A673 (cell line): ENCODE measurements at regions of chr17 and their contacts with region 1.

Region 1: GRCh38 chr17:72120642-72121163 is at the start of gene SOX9:
- DNase-seq: peak; percentile 98
- H3K4me3 ChIP-seq: peak within 1 kb of the TSS; percentile 93
- H3K27ac ChIP-seq: peak within 1 kb of the TSS; percentile 67
- H3K4me1 ChIP-seq: peaks cover 36% of the 10 kb centered on the region
- H3K27me3 ChIP-seq: no peaks in the 10 kb centered on the region
- CTCF ChIP-seq: no peak
- total RNA-seq, gene SOX9: 31.1 and 37.5 TPM in 2 replicates

Region 2: GRCh38 chr17:70767102-70767701 is 1353.5 kb before region 1 on chr17:
- CTCF ChIA-PET with region 1: no interaction called
- POLR2A ChIA-PET with region 1: no interaction called
- intact Hi-C with region 1: loop called (anchors 1 kb)
- DNase-seq: peak; percentile 34
- H3K4me3 ChIP-seq: no peak overlapping the region
- H3K27ac ChIP-seq: no peak overlapping the region
- H3K4me1 ChIP-seq: no peaks in the 10 kb centered on the region
- H3K27me3 ChIP-seq: no peaks in the 10 kb centered on the region
- CTCF ChIP-seq: peak; percentile 72

Region 3: DNA sequence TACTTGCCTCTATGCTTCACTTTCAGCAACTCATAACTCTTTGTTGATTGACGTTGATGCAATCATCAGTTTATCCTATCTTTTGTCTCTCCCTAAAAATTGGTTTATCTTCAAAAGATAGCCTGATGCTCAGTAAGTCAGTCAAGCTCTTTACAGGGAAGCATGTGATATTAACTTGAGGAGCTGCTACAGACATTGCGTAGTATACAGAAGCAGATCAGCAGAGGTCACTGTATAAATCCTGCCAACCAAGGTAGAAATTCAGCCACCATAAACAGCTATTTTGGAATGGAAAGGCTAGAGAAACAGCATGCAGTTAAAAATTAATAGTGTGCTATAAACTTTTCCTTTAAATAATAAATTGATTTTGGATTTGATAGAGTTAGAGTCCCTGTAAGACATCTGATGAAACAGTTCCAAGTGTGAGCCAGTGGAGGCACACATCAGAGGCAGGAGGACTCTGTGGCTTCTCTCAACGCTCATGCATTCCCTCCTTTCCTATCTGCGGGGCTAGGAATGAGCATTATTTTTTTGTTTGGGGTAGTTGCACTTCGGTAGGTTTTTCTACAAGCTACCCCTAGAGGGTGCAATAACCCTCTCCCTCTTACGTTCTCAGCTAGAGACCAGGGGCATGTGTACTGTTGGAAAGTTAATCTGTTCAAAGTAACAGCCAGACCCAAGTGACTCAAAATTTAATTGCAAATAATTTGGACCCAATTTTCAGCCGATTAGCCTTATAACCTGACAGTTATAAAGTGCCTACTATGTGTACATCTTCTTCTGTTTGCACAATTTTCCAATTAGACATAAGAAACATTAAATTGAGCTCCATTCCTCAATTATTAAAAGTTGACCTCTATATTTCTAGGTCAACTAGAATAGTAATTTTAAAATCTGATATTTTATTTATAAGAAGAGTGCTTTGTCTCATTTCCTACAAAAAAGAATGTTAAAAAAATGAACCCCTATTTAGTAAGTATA is 647.6 kb before region 1 on chr17:
- CTCF ChIA-PET with region 1: interaction called, 3 read pairs
- POLR2A ChIA-PET with region 1: no interaction called
- intact Hi-C with region 1: loop called (anchors 1 kb)
- DNase-seq: peak; percentile 73
- H3K4me3 ChIP-seq: no peak overlapping the region
- H3K27ac ChIP-seq: no peak overlapping the region
- H3K4me1 ChIP-seq: no peaks in the 10 kb centered on the region
- H3K27me3 ChIP-seq: no peaks in the 10 kb centered on the region
- CTCF ChIP-seq: peak; percentile 73

Region 4: DNA sequence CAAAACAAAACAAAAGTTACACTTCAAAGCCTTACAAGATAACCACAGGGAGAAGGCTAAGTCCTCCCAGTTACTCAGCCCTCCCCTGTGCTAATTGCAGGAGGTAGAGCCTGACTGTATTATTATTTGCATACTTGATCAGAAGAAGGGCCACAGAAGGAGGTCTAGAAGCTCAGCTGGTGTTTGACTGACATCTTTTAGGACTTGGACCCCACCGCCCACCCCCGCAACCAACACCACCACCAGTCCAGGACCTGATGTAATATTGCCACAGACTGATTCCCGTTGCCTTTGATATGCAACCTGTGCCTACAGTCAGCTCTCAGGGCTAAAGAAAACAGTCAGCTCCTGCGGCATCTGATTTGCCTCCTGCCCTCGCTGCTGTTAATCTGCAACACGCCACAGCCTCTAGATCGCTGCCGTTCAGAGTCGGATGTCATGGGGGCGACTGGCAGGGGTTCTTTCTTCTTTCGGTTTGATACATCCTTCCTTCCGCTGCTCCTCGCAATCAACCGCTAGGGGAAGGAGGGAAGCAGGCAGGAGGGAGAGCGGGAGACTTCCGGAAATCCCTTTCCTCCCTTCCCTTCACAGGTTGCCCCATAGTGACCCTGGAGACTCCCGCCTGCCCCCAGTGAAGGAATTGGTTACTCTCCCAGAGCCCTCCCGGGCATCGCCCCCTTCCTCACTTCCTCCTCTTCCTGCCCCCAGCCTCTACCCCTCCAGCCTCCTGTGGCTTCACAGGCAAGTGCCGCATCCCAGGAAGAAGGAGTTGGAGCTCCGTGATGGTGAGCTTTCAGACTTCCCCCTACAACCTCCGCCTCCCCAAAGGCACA is 90.4 kb before region 1 on chr17:
- CTCF ChIA-PET with region 1: no interaction called
- POLR2A ChIA-PET with region 1: no interaction called
- intact Hi-C with region 1: loop called (anchors 2 kb)
- DNase-seq: peak; percentile 97
- H3K4me3 ChIP-seq: peak overlapping the region; percentile 43
- H3K27ac ChIP-seq: peak overlapping the region; percentile 81
- H3K4me1 ChIP-seq: peaks cover 32% of the 10 kb centered on the region
- H3K27me3 ChIP-seq: no peaks in the 10 kb centered on the region
- CTCF ChIP-seq: peak; percentile 61

Region 5: GRCh38 chr17:72136693-72137092 is 16.0 kb after region 1 on chr17:
- CTCF ChIA-PET with region 1: no interaction called
- POLR2A ChIA-PET with region 1: no interaction called
- intact Hi-C with region 1: no loop called
- DNase-seq: no peak
- H3K4me3 ChIP-seq: no peak overlapping the region
- H3K27ac ChIP-seq: no peak overlapping the region
- H3K4me1 ChIP-seq: peaks cover 3% of the 10 kb centered on the region
- H3K27me3 ChIP-seq: no peaks in the 10 kb centered on the region
- CTCF ChIP-seq: no peak

Region 6: GRCh38 chr17:72373910-72374741 is 253.4 kb after region 1 on chr17:
- CTCF ChIA-PET with region 1: no interaction called
- POLR2A ChIA-PET with region 1: interaction called, 15 read pairs
- intact Hi-C with region 1: loop called (anchors 5 kb)
- DNase-seq: peak; percentile 71
- H3K4me3 ChIP-seq: no peak overlapping the region
- H3K27ac ChIP-seq: peak overlapping the region; percentile 48
- H3K4me1 ChIP-seq: peaks cover 62% of the 10 kb centered on the region
- H3K27me3 ChIP-seq: no peaks in the 10 kb centered on the region
- CTCF ChIP-seq: no peak

Region 7: DNA sequence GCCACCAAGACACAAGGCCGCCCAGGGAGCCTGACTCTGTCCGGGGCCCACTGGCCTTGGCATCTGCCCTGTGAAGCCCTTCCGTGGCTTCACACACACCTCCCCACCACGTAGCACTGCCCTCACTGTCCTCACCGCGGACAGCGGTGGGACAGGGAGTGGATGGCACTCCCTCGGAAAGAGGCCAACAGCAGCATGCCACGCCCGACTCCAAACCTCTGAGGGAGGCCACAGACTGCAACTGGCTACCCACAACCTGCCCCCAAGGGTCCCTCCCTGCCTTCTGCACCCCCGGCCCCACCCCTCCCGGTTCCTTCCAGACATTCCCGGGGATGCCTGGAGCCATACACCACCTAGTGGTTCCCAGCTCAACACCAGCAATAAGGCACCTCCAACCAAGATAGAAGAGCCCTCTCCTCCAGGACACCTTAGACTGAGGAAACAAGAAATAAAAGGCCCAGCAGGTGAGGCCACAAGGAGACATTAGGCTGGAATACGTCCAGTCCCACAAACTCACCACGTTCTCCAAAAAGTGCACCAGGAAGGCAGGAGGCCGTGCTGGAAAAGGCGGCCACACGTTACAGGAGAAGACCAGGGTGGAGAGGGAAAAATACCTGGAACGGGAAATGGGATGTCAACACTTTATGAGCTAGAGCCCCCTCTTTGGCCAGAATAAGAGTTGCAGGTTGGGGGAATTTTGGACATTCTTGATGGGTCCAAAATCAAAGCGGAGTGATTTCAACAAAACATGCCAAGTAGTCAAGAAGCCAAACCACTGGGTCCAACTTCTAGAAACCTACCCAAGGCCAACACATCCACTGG is 310.1 kb after region 1 on chr17:
- CTCF ChIA-PET with region 1: no interaction called
- POLR2A ChIA-PET with region 1: interaction called, 3 read pairs
- intact Hi-C with region 1: loop called (anchors 5 kb)
- DNase-seq: peak; percentile 50
- H3K4me3 ChIP-seq: no peak overlapping the region
- H3K27ac ChIP-seq: no peak overlapping the region
- H3K4me1 ChIP-seq: peaks cover 20% of the 10 kb centered on the region
- H3K27me3 ChIP-seq: no peaks in the 10 kb centered on the region
- CTCF ChIP-seq: peak; percentile 59